ENCODE measurements at regions of chr17 and their contacts with region 1.

Region 1: DNA sequence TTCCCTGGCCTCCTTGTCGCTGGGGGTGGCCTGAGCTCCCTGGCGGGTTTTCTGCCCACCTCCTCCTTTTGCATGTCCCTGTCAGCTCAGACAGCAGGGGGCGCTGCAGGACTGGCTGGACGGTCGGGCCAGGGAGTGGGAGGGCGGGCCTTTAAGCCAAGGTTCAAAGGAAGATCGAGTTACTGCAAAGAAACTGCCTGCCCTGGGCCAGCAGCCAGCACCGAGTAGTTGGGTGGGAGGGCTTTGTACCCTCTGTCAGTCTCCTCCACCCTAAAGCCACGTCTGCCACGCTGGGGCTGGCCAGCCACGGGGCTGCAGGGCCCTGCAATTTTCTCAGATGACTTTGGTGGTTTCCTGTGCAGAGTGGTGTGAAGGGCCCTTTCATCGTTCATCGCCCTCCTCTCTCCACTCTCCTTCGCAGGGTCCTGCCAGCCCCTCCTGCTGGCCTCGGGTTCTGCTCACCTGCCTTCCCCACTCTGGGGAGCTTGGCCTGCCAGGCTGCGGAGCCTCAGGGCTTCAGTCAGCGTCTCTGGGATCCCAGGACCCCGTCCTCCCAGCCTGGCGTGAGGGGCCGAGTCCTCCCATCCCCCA is 12.3 kb downstream of the GPR142 start:
- DNase-seq: peak; percentile 84 to 95 (median 90)
- ATAC-seq: peak; percentile 92
- H3K4me3 ChIP-seq: peak overlapping the region; percentile 16
- H3K4me3 Mint-ChIP-seq: no peak overlapping the region
- H3K27ac ChIP-seq: no peak overlapping the region
- H3K27ac Mint-ChIP-seq: no peak overlapping the region
- H3K4me1 ChIP-seq: peaks cover 13% of the 10 kb centered on the region
- H3K4me1 Mint-ChIP-seq: no peaks in the 10 kb centered on the region
- H3K27me3 ChIP-seq: no peaks in the 10 kb centered on the region
- H3K27me3 Mint-ChIP-seq: no peaks in the 10 kb centered on the region
- CTCF ChIP-seq: peak; percentile 87

Region 2: DNA sequence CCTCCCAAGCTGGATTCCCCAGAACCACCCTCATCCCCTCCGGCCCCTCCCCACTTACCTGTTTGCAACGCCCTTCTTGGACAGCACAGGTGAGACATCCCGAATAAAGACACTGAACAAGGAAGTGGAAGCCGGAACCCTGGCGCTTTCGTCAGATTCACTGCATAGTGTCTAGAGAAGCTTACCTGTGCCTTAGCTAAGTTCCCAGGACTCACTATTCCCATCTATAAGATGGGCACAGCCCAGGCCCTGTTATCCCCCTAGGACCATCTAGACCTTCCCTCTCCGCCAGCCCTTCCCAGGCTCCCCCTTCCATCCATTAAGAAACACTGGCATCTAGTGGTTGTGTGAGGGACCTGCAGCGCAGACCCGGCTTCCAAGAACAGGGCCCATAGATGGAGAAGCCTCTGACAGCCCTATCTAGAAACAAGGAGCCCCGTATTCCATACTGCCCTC is 203.0 kb before region 1 on chr17:
- CTCF ChIA-PET with region 1: no interaction called
- POLR2A ChIA-PET with region 1: no interaction called
- intact Hi-C with region 1: no loop called
- DNase-seq: peak in 10 of 14 experiments; percentile 8 to 54 (median 32)
- ATAC-seq: peak; percentile 70
- H3K4me3 ChIP-seq: no peak overlapping the region
- H3K4me3 Mint-ChIP-seq: no peak overlapping the region
- H3K27ac ChIP-seq: no peak overlapping the region
- H3K27ac Mint-ChIP-seq: no peak overlapping the region
- H3K4me1 ChIP-seq: no peaks in the 10 kb centered on the region
- H3K4me1 Mint-ChIP-seq: no peaks in the 10 kb centered on the region
- H3K27me3 ChIP-seq: peaks cover 8 to 20% of the 10 kb centered on the region in 2 experiments
- H3K27me3 Mint-ChIP-seq: peaks cover 55% of the 10 kb centered on the region
- CTCF ChIP-seq: peak; percentile 52

Region 3: DNA sequence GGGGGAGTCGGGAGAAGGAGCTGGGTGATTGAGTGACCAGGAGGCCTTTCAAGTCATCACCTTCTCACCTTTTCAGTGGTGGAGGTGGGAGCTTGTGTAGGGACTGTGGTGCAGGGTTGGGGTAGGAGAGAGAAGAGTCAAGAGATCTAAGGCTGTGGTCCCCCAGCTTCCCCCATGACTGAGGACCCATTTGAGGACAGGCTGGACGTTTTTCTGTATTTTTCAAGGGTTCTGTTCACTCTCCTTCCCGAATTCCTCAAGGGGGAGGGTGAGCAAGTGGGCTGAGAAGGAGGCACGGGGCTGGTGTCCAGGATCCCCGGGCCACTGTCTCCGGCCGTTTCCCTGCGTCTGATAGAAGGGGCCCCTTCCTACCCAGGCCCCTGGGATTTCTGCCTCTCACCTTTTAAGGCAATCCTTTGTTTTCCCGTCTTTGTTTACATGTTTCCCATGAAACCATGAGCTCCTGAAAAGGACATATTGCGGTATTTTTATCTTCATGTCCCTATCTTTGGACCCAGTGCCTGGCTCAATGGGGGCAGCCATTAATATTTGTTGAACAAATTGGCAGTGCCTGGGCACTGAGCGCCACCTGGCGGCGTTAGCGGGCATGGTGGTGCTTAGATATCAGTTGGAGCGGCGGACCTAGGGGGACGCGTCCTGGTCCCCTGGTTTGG is 77.7 kb after region 1 on chr17:
- CTCF ChIA-PET with region 1: interaction called, 17 read pairs
- POLR2A ChIA-PET with region 1: no interaction called
- intact Hi-C with region 1: loop called (anchors 1 to 2 kb)
- DNase-seq: peak; percentile 45 to 86 (median 67)
- ATAC-seq: peak; percentile 60
- H3K4me3 ChIP-seq: no peak overlapping the region
- H3K4me3 Mint-ChIP-seq: peak overlapping the region; percentile 51
- H3K27ac ChIP-seq: no peak overlapping the region
- H3K27ac Mint-ChIP-seq: no peak overlapping the region
- H3K4me1 ChIP-seq: peaks cover 68% of the 10 kb centered on the region
- H3K4me1 Mint-ChIP-seq: peaks cover 27% of the 10 kb centered on the region
- H3K27me3 ChIP-seq: peaks cover 0 to 3% of the 10 kb centered on the region in 2 experiments
- H3K27me3 Mint-ChIP-seq: peaks cover 6% of the 10 kb centered on the region
- CTCF ChIP-seq: peak; percentile 83

Region 4: GRCh38 chr17:74528491-74529199 is 149.1 kb after region 1 on chr17:
- CTCF ChIA-PET with region 1: interaction called, 9 read pairs
- POLR2A ChIA-PET with region 1: no interaction called
- intact Hi-C with region 1: loop called in 1 of 2 experiments (anchors 1 kb)
- DNase-seq: peak in 3 of 14 experiments; percentile 32 to 76 (median 67)
- ATAC-seq: no peak
- H3K4me3 ChIP-seq: no peak overlapping the region
- H3K4me3 Mint-ChIP-seq: no peak overlapping the region
- H3K27ac ChIP-seq: no peak overlapping the region
- H3K27ac Mint-ChIP-seq: no peak overlapping the region
- H3K4me1 ChIP-seq: no peaks in the 10 kb centered on the region
- H3K4me1 Mint-ChIP-seq: peaks cover 5% of the 10 kb centered on the region
- H3K27me3 ChIP-seq: peaks cover 11 to 15% of the 10 kb centered on the region in 2 experiments
- H3K27me3 Mint-ChIP-seq: peaks cover 46% of the 10 kb centered on the region
- CTCF ChIP-seq: no peak

Region 5: DNA sequence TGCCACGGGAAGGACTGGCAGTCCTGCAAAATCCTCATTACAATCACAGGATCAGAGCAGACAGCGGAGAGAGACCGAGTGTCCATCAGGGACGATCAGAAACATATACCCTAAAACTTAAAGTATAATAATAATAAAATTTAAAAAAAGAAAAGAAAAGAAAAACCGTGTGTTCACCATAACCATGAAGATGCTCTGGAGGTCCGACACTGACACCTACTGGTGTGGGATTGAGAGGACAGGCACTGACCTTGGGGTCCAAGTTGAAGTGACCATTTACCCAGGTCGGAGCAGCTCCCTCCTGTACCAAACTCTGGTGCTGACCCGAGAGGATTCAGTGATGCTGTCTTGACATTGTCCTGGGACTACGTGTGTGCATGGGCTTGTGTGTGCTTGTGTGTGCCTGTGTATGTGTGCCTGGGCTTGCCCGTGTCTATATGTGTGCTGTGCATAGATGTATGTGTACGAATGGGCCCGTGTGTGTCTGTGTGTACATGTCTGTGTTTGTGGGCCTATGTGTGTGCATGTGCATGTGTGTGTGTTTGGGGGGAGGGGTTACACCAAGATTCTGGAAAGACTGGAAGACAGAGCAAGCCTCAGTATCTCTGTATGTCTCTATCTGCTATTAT is 222.5 kb after region 1 on chr17:
- CTCF ChIA-PET with region 1: no interaction called
- POLR2A ChIA-PET with region 1: no interaction called
- intact Hi-C with region 1: loop called (anchors 1 to 5 kb)
- DNase-seq: peak in 8 of 14 experiments; percentile 6 to 57 (median 22)
- ATAC-seq: no peak
- H3K4me3 ChIP-seq: no peak overlapping the region
- H3K4me3 Mint-ChIP-seq: no peak overlapping the region
- H3K27ac ChIP-seq: no peak overlapping the region
- H3K27ac Mint-ChIP-seq: no peak overlapping the region
- H3K4me1 ChIP-seq: peaks cover 17% of the 10 kb centered on the region
- H3K4me1 Mint-ChIP-seq: peaks cover 41% of the 10 kb centered on the region
- H3K27me3 ChIP-seq: peaks cover 0 to 13% of the 10 kb centered on the region in 2 experiments
- H3K27me3 Mint-ChIP-seq: peaks cover 9% of the 10 kb centered on the region
- CTCF ChIP-seq: peak; percentile 71

Region 6: DNA sequence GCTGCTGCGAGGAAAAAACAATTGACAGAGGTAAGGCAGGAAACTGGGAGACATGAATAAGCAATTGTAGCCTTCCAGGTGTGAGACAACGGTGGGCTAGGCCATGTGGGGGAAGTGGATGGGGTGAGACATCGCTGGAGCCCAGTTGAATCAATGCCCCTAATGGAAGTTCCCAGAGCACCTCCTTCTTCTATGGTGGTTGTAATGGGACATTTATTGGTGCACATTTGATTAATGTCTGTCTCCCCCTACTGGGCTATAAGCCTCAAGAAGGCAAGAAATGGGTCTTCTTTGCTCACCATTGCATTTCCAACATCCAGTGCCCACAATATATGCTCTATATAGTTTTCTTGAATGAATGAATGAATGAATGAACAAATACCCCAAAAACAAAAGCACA is 266.6 kb after region 1 on chr17:
- CTCF ChIA-PET with region 1: no interaction called
- POLR2A ChIA-PET with region 1: no interaction called
- intact Hi-C with region 1: loop called in 1 of 2 experiments (anchors 10 kb)
- DNase-seq: peak in 3 of 14 experiments; percentile 21 to 58 (median 51)
- ATAC-seq: no peak
- H3K4me3 ChIP-seq: no peak overlapping the region
- H3K4me3 Mint-ChIP-seq: no peak overlapping the region
- H3K27ac ChIP-seq: no peak overlapping the region
- H3K27ac Mint-ChIP-seq: no peak overlapping the region
- H3K4me1 ChIP-seq: peaks cover 6% of the 10 kb centered on the region
- H3K4me1 Mint-ChIP-seq: no peaks in the 10 kb centered on the region
- H3K27me3 ChIP-seq: peaks cover 25 to 27% of the 10 kb centered on the region in 2 experiments
- H3K27me3 Mint-ChIP-seq: peaks cover 67% of the 10 kb centered on the region
- CTCF ChIP-seq: peak; percentile 45